ENCODE measurements at regions of chr18 and their contacts with region 1.

Region 1: DNA sequence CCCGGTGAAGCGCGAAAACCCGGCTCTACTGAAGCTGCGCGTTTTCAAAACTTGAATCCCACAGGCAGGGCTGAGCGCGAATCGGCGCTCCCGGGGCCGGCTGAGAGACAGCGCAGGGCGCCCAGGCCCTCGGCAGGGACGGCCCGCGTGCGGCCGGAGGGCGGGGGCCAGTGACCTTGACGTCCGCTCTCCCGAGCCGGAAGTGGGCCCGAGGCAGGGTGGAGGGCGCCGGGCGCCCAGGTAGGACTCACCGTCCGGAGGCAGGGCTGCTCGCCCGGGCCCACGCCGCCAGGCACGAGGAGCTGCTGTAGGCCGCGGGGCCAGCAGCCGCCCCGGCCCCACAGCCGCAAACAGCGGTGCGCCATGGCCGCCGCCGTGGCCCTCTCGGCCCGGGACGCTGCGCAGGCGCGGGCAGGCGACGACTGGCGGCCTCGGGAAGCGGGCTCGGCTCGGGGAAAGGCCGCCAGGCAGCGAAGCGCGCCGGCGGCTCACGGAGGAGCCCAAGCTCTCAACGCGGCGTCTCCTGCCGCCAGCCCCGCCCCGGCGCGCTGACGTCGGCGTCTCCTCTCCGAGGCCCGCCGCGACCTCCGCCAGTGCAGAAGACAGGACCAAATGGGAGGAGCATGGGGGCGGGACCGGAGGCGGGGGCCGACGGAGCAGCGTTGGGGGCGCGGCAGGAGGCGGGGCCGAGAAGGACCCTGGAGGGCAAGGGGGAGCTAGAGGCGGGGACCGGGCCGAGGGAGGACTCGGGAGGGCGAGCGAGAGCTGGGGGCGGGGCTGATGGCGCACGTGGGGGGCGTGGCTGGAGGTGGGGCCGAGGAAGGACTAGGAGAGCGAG is at the start of gene AFG3L2:
- DNase-seq: peak; percentile 100
- ATAC-seq: peak; percentile 91
- H3K4me3 Mint-ChIP-seq: peak within 1 kb of the TSS; percentile 92
- H3K27ac Mint-ChIP-seq: peak within 1 kb of the TSS; percentile 88
- H3K4me1 Mint-ChIP-seq: peaks cover 43% of the 10 kb centered on the region
- H3K27me3 Mint-ChIP-seq: no peaks in the 10 kb centered on the region
- total RNA-seq, gene AFG3L2: 38.0 to 56.5 TPM

Region 2: GRCh38 chr18:11980555-11981382 is 396.2 kb before region 1 on chr18:
- CTCF ChIA-PET with region 1: no interaction called
- POLR2A ChIA-PET with region 1: interaction called, 5 read pairs
- intact Hi-C with region 1: loop called in 1 of 2 experiments (anchors 1 kb)
- DNase-seq: peak; percentile 99
- ATAC-seq: peak; percentile 95
- H3K4me3 Mint-ChIP-seq: peak overlapping the region; percentile 91
- H3K27ac Mint-ChIP-seq: peak overlapping the region; percentile 82
- H3K4me1 Mint-ChIP-seq: peaks cover 16% of the 10 kb centered on the region
- H3K27me3 Mint-ChIP-seq: peaks cover 4% of the 10 kb centered on the region

Region 3: GRCh38 chr18:12491611-12492435 is 114.9 kb after region 1 on chr18:
- CTCF ChIA-PET with region 1: no interaction called
- POLR2A ChIA-PET with region 1: no interaction called
- intact Hi-C with region 1: no loop called
- DNase-seq: no peak
- ATAC-seq: no peak
- H3K4me3 Mint-ChIP-seq: no peak overlapping the region
- H3K27ac Mint-ChIP-seq: no peak overlapping the region
- H3K4me1 Mint-ChIP-seq: no peaks in the 10 kb centered on the region
- H3K27me3 Mint-ChIP-seq: no peaks in the 10 kb centered on the region

Region 4: GRCh38 chr18:12657684-12658425 is 280.9 kb after region 1 on chr18 and contains the start of gene SPIRE1:
- CTCF ChIA-PET with region 1: interaction called, 7 read pairs
- POLR2A ChIA-PET with region 1: no interaction called
- intact Hi-C with region 1: loop called (anchors 1 to 5 kb)
- DNase-seq: peak; percentile 61
- ATAC-seq: peak; percentile 57
- H3K4me3 Mint-ChIP-seq: peak within 1 kb of the TSS; percentile 71
- H3K27ac Mint-ChIP-seq: no peak within 1 kb of the TSS
- H3K4me1 Mint-ChIP-seq: peaks cover 17% of the 10 kb centered on the region
- H3K27me3 Mint-ChIP-seq: peaks cover 20% of the 10 kb centered on the region
- total RNA-seq, gene SPIRE1: 3.0 to 3.8 TPM

Region 5: GRCh38 chr18:12883684-12884405 is 506.9 kb after region 1 on chr18 and contains the start of gene PTPN2:
- CTCF ChIA-PET with region 1: no interaction called
- POLR2A ChIA-PET with region 1: interaction called, 5 read pairs
- intact Hi-C with region 1: loop called in 1 of 2 experiments (anchors 1 kb)
- DNase-seq: peak; percentile 93
- ATAC-seq: peak; percentile 88
- H3K4me3 Mint-ChIP-seq: peak within 1 kb of the TSS; percentile 78
- H3K27ac Mint-ChIP-seq: peak within 1 kb of the TSS; percentile 94
- H3K4me1 Mint-ChIP-seq: peaks cover 56% of the 10 kb centered on the region
- H3K27me3 Mint-ChIP-seq: no peaks in the 10 kb centered on the region
- total RNA-seq, gene PTPN2: 60.6 to 72.9 TPM

Region 6: DNA sequence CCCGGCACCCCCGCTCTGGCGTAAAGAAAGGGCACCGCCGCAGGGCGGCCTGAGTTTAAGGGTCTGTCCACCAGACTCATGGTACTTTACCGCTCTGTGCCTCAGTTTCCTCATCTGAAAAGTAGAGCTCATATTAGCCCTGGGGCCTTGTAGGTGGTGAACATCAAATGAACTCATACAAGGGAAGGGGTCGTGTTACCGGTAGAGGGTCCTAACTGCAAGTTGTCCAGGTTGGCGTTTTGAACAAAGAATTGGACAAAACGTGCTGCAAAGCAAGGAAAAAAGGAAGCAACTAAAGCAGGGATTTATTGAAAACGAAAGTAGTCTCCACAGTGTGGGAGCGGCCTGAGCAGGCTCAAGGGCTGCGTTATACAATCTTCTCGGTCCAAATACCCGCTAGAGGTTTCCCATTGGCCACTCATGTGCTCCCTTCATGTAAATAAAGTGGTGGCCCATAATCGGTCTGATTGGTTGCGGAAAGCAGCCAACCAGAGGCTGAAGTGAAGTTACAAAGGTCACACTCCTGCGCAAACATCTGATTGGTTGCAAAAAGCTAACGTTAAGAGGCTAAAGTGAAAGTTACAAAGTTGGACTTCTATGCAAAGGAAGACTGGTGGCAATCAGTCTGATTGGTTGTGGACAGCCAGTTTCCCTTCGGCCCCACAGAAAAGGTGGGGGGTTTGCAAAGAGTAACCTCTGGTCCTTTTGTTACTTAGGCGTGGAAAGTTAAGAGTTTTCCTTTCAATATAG is 760.9 kb after region 1 on chr18:
- CTCF ChIA-PET with region 1: no interaction called
- POLR2A ChIA-PET with region 1: no interaction called
- intact Hi-C with region 1: loop called in 1 of 2 experiments (anchors 5 kb)
- DNase-seq: peak; percentile 76
- ATAC-seq: peak; percentile 78
- H3K4me3 Mint-ChIP-seq: peak overlapping the region; percentile 83
- H3K27ac Mint-ChIP-seq: peak overlapping the region; percentile 86
- H3K4me1 Mint-ChIP-seq: peaks cover 24% of the 10 kb centered on the region
- H3K27me3 Mint-ChIP-seq: peaks cover 2% of the 10 kb centered on the region